Esophagus squamous epithelium (tissue), 5 donors: ENCODE measurements at regions of chr10 and their contacts with region 1.

Region 1: GRCh38 chr10:63720072-63720537 is 198.9 kb downstream of the REEP3 start:
- DNase-seq: no peak
- H3K4me3 ChIP-seq: no peak overlapping the region
- H3K27ac ChIP-seq: no peak overlapping the region
- H3K4me1 ChIP-seq: peaks cover 0 to 22% (median 0%) of the 10 kb centered on the region in 3 donors
- H3K27me3 ChIP-seq: peaks cover 0 to 7% (median 0%) of the 10 kb centered on the region in 4 donors
- CTCF ChIP-seq: peak; percentile 85 to 98 (median 96)
- POLR2A ChIP-seq: no peak

Region 2: GRCh38 chr10:63173468-63174232 is 546.5 kb before region 1 on chr10:
- intact Hi-C with region 1: loop called (anchors 10 kb)
- DNase-seq: no peak
- H3K4me3 ChIP-seq: no peak overlapping the region
- H3K27ac ChIP-seq: no peak overlapping the region
- H3K4me1 ChIP-seq: peaks cover 0 to 8% (median 0%) of the 10 kb centered on the region in 3 donors
- H3K27me3 ChIP-seq: no peaks in the 10 kb centered on the region
- CTCF ChIP-seq: no peak
- POLR2A ChIP-seq: no peak

Region 3: DNA sequence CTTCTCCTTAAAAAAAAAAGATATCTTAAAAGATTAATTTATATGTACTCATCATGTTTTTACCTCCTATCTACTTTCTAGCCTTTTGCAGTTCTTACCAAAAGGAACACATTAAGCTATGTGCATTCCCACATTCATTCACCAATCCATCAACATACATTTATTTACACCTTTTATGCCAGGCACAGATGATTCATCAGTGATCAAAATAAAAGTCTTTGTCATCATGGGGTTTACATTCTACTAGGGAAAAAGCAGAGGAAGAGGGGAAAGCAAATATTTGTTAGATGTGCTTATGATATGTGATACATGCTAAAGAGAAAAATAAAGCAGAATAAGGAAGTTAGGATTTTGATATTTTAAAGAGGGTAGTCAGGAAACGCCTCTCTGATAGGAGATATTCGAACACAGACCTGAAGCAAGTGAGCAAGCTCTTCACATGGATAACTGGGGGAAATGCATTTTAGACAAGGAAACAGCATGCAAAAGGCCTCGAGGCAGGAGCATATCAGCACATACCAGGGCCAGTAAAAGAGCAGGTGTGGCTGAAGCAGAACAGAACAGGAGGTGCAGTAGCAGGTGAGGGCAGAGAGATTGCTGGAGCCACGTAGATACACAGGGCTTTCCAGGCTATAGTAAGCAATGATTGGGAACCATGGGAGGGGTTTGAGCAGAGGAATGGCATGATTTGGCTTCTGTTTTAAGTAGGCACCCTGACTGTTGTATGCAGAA is 131.5 kb before region 1 on chr10:
- intact Hi-C with region 1: no loop called
- DNase-seq: no peak
- H3K4me3 ChIP-seq: no peak overlapping the region
- H3K27ac ChIP-seq: no peak overlapping the region
- H3K4me1 ChIP-seq: peaks cover 0 to 47% (median 0%) of the 10 kb centered on the region in 3 donors
- H3K27me3 ChIP-seq: no peaks in the 10 kb centered on the region
- CTCF ChIP-seq: no peak
- POLR2A ChIP-seq: no peak